HEK293T (cell line): ENCODE measurements at regions of chr15 and their contacts with region 1.

Region 1: GRCh38 chr15:70826634-70827033 is 27.3 kb downstream of the LARP6 start:
- DNase-seq: no peak

Region 2: GRCh38 chr15:70875001-70875782 is 48.6 kb after region 1 on chr15:
- CTCF ChIA-PET with region 1: interaction called, 34 read pairs
- POLR2A ChIA-PET with region 1: no interaction called
- DNase-seq: no peak